ENCODE measurements at regions of chr17 and their contacts with region 1.

Region 1: DNA sequence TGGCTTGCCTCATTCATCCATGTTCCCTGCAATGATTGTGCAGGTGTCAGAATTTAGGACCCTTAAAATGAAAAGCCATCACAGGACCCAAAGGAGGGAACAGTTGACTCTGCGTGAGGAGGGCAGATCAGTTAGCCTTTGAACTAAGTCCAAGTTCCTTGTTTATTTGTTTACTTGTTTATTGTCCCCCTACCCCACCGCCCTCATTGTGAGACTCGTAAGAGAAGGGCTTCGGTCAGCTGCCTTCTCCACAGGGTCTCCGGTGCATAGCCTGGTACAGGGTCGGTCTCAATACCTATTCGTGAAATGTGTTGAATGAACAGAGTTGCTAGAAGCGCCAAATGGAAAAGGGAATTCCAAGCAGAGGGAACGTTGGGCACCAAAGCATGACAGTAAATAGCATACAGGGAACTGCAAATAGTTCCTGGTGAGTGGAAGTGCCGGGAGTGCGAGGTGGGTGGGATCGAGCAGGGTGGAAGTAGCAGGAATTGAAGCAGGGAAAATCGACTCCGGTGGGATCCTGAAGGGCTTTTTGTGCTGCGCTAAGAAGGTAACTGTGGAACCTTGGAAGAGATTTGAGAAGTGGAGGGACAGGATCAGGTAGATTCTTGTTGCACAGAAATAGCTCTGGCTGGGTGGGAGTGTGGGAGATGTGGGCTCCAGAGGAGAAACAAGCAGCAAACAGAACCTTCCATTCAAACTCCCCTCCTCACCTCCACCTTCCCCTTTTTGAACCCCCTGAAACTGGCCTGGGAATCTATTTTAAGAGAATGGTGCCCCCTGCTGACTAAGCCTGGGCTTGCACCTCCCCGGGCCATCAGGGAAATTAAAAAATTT is 12.7 kb downstream of the SLC35B1 start:
- DNase-seq: peak in 34 of 35 experiments; percentile 22 to 79 (median 62)
- ATAC-seq: peak; percentile 36 to 69 (median 56)
- H3K4me3 ChIP-seq: no peak overlapping the region
- H3K4me3 Mint-ChIP-seq: peak overlapping the region in 1 of 3 donors; percentile 37
- H3K27ac ChIP-seq: peak overlapping the region; percentile 58
- H3K27ac Mint-ChIP-seq: peak overlapping the region; percentile 71 to 82
- H3K4me1 ChIP-seq: peaks cover 19 to 33% of the 10 kb centered on the region in 2 experiments
- H3K4me1 Mint-ChIP-seq: peaks cover 48 to 52% (median 50%) of the 10 kb centered on the region in 3 donors
- H3K27me3 ChIP-seq: no peaks in the 10 kb centered on the region
- H3K27me3 Mint-ChIP-seq: no peaks in the 10 kb centered on the region

Region 2: DNA sequence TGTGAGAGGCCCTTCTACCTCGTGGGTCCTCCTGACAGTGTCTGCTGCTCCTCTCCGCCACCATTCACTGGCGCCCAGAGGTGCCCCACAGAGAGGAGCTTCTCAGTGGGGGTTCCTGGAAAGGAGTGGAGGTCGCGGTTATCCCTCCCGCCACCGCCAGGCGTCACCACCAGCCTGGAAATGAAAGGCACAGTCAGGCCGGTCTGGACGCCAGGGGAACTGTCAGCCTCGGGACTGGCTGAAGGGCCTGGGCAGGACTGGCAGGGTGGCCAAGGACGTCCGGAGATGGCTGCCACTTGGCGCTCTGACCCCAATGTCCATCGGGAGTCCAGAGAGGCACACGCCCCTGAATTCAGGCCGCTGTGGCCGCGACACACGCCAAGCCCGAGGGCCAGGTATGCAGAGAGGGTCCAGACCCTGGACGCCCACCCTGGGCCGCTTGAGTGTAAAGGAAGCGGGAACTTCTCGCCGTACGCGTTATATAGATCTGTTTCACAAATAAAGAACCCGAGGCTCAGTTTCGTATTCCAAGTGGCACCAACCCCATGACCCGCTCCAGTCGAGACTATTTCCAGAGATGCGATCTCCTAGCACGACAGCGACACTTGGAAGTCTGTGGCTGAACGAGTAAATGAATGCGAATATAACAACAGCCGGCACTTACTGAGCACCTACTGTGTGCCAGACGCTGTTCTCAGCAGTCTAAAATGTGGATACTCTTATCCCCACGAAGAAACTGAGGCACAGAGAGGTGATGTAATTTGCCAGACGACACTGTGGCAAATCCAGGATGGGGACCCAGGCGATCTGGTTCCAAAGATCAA is 127.0 kb before region 1 on chr17:
- CTCF ChIA-PET with region 1: interaction called, 4 to 10 read pairs
- POLR2A ChIA-PET with region 1: interaction called in 1 of 2 experiments, 4 read pairs
- DNase-seq: peak; percentile 32 to 84 (median 72)
- ATAC-seq: peak; percentile 48 to 55 (median 52)
- H3K4me3 ChIP-seq: peak overlapping the region; percentile 12 to 48
- H3K4me3 Mint-ChIP-seq: peak overlapping the region; percentile 49 to 69 (median 67)
- H3K27ac ChIP-seq: no peak overlapping the region
- H3K27ac Mint-ChIP-seq: peak overlapping the region in 1 of 2 donors; percentile 11
- H3K4me1 ChIP-seq: peaks cover 0 to 29% of the 10 kb centered on the region in 2 experiments
- H3K4me1 Mint-ChIP-seq: peaks cover 13 to 17% (median 16%) of the 10 kb centered on the region in 3 donors
- H3K27me3 ChIP-seq: peaks cover 0 to 46% of the 10 kb centered on the region in 2 experiments
- H3K27me3 Mint-ChIP-seq: peaks cover 4 to 26% of the 10 kb centered on the region in 2 donors

Region 3: GRCh38 chr17:49624896-49625295 is 70.2 kb before region 1 on chr17:
- CTCF ChIA-PET with region 1: no interaction called
- POLR2A ChIA-PET with region 1: no interaction called
- DNase-seq: no peak
- ATAC-seq: no peak
- H3K4me3 ChIP-seq: no peak overlapping the region
- H3K4me3 Mint-ChIP-seq: no peak overlapping the region
- H3K27ac ChIP-seq: no peak overlapping the region
- H3K27ac Mint-ChIP-seq: no peak overlapping the region
- H3K4me1 ChIP-seq: no peaks in the 10 kb centered on the region
- H3K4me1 Mint-ChIP-seq: peaks cover 33 to 41% (median 40%) of the 10 kb centered on the region in 3 donors
- H3K27me3 ChIP-seq: no peaks in the 10 kb centered on the region
- H3K27me3 Mint-ChIP-seq: no peaks in the 10 kb centered on the region

Region 4: GRCh38 chr17:49779739-49780231 is 84.7 kb after region 1 on chr17:
- CTCF ChIA-PET with region 1: interaction called in 1 of 2 experiments, 4 read pairs
- POLR2A ChIA-PET with region 1: interaction called in 1 of 2 experiments, 14 read pairs
- DNase-seq: peak in 4 of 35 experiments; percentile 13 to 62 (median 22)
- ATAC-seq: peak; percentile 41 to 73 (median 54)
- H3K4me3 ChIP-seq: no peak overlapping the region
- H3K4me3 Mint-ChIP-seq: no peak overlapping the region
- H3K27ac ChIP-seq: no peak overlapping the region
- H3K27ac Mint-ChIP-seq: no peak overlapping the region
- H3K4me1 ChIP-seq: peaks cover 0 to 5% of the 10 kb centered on the region in 2 experiments
- H3K4me1 Mint-ChIP-seq: peaks cover 6 to 14% (median 8%) of the 10 kb centered on the region in 3 donors
- H3K27me3 ChIP-seq: no peaks in the 10 kb centered on the region
- H3K27me3 Mint-ChIP-seq: peaks cover 0 to 2% of the 10 kb centered on the region in 2 donors

Region 5: DNA sequence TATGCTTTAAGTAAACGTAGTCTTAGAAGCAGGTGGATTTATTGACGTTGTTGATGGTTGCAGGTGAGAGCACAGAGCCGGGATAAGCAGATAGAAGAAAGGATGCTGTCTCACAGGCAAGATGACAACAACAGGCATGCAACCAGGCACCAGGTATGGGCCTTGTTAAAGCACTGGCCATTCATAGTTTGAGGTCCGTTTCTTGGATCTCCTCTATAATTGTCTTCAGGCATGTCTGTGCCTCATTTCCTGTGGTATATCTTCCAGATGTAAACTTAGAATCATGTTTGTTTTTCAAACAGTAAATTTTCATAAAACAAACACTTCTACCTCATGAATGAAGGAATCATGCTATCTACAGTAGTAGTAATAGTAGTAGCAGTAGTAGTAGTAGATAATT is 114.0 kb after region 1 on chr17:
- CTCF ChIA-PET with region 1: no interaction called
- POLR2A ChIA-PET with region 1: no interaction called
- DNase-seq: no peak
- ATAC-seq: no peak
- H3K4me3 ChIP-seq: no peak overlapping the region
- H3K4me3 Mint-ChIP-seq: no peak overlapping the region
- H3K27ac ChIP-seq: no peak overlapping the region
- H3K27ac Mint-ChIP-seq: peak overlapping the region in 1 of 2 donors; percentile 7
- H3K4me1 ChIP-seq: peaks cover 0 to under 1% of the 10 kb centered on the region in 2 experiments
- H3K4me1 Mint-ChIP-seq: peaks cover 43 to 53% (median 51%) of the 10 kb centered on the region in 3 donors
- H3K27me3 ChIP-seq: no peaks in the 10 kb centered on the region
- H3K27me3 Mint-ChIP-seq: no peaks in the 10 kb centered on the region